ENCODE measurements at regions of chr17 and their contacts with region 1.

Region 1: DNA sequence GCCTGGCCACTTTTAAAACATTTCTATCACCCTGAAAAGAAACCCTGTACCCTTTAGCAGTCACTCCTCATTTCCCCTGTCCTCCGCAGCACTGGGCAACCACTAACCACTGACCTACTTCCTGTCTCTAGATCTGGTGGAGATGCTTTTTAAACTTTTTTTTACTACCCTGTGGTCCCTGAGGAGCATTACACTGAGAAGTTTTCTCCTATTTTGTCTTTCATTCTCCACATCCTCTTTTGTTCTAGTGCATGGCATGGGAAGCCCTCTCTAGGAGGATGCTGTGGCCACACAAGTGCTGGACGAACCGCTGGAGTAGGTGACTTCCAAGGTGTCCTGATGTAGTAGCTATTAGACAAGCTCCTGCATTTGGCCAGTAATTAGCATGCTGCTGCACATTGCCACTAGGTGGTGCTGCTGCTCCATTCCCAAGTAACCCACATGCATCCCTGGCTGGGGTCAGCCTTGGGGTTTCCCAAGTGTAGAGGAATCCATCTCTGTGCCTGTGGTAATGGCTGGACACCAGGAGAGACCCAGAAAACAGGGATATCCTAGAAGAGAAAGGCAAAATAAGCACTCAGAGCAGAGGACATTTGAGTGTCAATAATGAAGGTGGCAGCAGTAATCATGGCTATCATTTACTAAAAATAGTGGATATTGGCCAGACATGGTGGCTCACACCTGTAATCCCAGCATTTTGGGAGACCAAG is 143.8 kb upstream of the CRHR1 start:
- DNase-seq: peak; percentile 70 to 88 (median 73)
- H3K4me3 ChIP-seq: no peak overlapping the region
- H3K27ac ChIP-seq: no peak overlapping the region
- H3K4me1 ChIP-seq: no peaks in the 10 kb centered on the region
- H3K27me3 ChIP-seq: no peaks in the 10 kb centered on the region
- CTCF ChIP-seq: peak; percentile 90 to 98 (median 95)
- POLR2A ChIP-seq: no peak

Region 2: GRCh38 chr17:45828628-45829027 is 188.3 kb after region 1 on chr17:
- intact Hi-C with region 1: loop called (anchors 2 to 5 kb)
- DNase-seq: no peak
- H3K4me3 ChIP-seq: no peak overlapping the region
- H3K27ac ChIP-seq: no peak overlapping the region
- H3K4me1 ChIP-seq: no peaks in the 10 kb centered on the region
- H3K27me3 ChIP-seq: no peaks in the 10 kb centered on the region
- CTCF ChIP-seq: no peak
- POLR2A ChIP-seq: no peak